ENCODE measurements at regions of chr2 and their contacts with region 1.

Region 1: DNA sequence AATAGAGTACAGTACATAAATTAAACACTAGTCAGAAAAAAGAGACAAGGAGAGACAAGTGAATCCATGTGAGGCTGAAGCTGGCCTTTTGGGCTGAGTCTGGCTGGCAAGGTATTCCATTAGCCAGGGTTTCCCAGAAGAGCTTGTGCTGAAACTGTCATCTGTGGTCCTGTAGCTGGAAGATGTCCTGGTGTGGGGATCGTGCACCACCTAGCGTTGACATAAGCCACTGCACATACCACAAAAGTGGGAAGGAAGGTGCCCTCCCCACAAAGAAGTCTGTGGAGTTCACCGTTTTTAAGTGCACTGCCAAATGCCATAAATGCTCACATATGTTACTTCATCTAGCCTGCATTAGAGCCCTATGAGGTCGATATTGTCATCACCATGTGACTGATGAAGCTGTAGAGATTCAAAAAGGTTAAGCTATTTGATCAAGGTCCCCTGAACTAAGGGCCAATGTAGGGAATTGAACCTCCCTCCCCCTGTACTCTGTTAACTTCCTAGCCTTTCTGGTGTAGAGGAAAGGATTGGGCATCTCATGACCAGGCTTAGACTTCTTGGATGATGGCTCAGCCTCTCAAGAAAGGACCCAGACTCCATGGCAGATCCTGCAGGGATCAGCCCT is 31.9 kb upstream of the GALNT14 start:
- DNase-seq: peak; percentile 64 to 82 (median 76)
- H3K4me3 ChIP-seq: no peak overlapping the region
- H3K27ac ChIP-seq: no peak overlapping the region
- H3K4me1 ChIP-seq: peaks cover 0 to 4% (median 2%) of the 10 kb centered on the region in 4 experiments
- H3K27me3 ChIP-seq: no peaks in the 10 kb centered on the region

Region 2: DNA sequence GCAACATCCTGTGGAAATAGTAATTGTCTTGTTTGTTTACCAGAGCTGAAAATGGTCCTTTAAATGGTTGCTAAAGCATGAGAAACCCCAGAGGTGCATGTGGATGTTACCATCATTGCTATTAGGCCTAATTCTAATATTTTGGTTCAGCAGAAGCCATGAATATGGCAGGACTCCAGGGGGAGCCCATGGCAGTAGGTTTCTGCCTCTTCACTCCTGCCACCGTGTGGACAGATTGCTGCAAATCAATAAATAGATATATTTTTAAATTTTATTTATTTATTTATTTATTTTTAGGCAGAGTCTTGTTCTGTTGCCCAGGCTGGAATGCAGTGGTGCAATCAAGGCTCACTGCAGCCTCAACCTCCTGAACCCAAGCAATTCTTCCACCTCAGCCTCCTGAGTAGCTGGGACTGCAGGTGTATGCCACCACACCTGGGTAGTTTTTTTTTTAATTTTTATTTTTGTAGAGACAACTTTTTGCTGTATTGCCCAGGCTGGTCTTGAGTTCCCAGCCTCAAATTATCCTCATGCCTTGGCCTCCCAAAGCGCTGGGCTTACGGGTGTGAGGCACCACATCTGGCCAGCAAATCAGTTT is 308.0 kb before region 1 on chr2:
- CTCF ChIA-PET with region 1: interaction called, 23 read pairs
- POLR2A ChIA-PET with region 1: no interaction called
- DNase-seq: peak; percentile 82 to 91 (median 87)
- H3K4me3 ChIP-seq: no peak overlapping the region
- H3K27ac ChIP-seq: no peak overlapping the region
- H3K4me1 ChIP-seq: peaks cover 6 to 20% (median 14%) of the 10 kb centered on the region in 4 experiments
- H3K27me3 ChIP-seq: peaks cover 0 to 6% (median 0%) of the 10 kb centered on the region in 5 experiments

Region 3: DNA sequence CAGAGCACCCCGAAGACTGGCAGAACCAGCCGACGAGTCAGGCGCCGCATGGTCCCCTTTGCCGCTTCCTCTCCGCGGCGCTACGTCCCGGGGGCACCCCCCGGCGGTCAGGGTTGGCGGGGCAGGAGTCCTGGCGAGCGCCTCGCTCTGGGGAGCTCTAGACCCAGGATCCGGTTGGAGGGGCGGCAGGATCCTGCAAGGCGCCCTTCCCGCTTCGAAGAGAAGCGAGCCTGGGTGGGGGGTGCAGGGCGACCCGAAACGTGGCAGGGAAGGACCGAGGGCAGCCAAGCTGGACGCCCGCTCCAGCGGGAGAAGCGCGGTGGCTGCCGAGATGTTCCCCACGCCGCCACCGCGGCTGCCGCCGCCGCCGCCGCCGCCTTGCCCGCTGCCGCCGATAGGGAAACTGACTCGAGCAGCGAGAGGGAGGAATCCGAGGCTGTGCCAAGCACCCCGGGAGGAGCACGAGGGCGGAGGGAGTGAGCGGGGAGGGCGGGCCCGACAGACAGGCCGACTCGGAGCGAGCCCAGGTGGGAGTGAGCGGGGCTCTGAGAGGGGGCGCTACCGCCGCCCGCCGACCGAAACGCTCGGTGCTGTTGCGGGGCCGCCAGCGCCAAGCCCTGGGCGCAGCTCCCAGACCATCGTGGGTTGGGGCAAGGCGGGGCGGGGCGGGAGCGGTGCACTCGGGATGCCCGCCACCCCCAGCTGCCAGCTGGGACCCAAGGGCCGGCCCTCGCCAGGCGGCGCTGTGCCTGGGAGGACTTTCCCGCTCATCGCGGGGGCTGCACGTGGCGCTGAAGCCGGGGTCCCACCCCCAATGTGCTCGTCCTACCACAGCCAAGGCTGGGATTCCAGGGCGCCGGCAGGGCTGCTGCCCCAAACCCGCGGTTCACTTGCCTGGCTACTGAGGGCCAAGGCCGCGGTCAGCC is 31.9 kb before region 1 on chr2 and contains the start of gene GALNT14:
- CTCF ChIA-PET with region 1: interaction called, 19 read pairs
- POLR2A ChIA-PET with region 1: no interaction called
- DNase-seq: peak; percentile 66 to 85 (median 76)
- H3K4me3 ChIP-seq: peak within 1 kb of the TSS; percentile 44 to 81 (median 71)
- H3K27ac ChIP-seq: no peak within 1 kb of the TSS
- H3K4me1 ChIP-seq: peaks cover 4 to 25% (median 22%) of the 10 kb centered on the region in 4 experiments
- H3K27me3 ChIP-seq: peaks cover 0 to 23% (median 0%) of the 10 kb centered on the region in 5 experiments

Region 4: DNA sequence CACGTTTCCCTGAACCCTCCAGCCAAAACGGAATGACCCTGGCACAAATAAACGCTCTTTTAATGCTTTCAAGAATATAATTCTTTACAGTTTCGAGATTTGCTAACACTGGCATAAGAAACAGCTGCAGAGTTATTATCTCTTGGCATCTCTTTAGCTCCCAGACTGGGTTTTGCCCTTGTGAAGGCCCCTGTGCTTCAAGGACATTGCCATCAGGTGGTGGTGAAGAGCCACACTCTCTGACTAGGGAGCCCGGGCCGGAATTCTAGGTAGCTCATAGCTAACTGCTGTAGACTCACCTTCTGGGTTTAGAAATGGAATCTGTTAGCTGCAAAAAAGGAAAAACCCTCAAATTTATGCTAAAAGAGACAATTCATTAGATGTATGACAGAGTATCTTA is 18.7 kb before region 1 on chr2:
- CTCF ChIA-PET with region 1: interaction called, 11 read pairs
- POLR2A ChIA-PET with region 1: no interaction called
- DNase-seq: no peak
- H3K4me3 ChIP-seq: no peak overlapping the region
- H3K27ac ChIP-seq: no peak overlapping the region
- H3K4me1 ChIP-seq: no peaks in the 10 kb centered on the region
- H3K27me3 ChIP-seq: peaks cover 0 to 4% (median 0%) of the 10 kb centered on the region in 5 experiments

Region 5: DNA sequence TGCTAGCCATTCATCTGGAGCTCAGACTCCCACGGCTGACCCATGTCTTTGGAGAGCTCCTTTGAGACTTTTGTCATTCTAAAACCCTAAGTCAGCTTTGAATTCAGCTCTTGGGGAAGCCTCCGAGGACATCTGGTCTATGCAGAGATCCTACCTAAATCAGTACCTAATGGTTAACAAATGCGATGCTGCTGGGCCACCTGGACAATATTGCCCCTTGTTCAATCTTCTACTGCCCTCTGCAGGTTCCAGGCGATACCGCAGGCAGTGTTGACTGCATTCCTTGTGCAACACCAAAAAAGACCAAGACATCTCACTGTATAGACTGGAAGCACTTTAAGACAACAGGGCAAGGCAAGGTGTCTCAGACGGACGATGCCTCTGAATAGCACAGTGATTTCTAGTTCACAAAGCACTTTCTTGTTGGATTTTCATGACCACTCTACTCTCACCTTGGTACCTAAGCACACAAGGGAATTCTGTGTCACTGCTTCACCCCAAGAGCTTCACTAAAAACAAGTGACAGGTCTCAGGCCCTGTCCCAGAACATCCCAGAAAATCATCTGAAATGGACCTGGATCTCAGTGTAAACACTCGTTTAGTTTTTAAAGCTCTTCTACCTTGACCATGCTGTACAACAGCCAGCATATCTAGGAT is 163.5 kb after region 1 on chr2:
- CTCF ChIA-PET with region 1: interaction called, 59 read pairs
- POLR2A ChIA-PET with region 1: no interaction called
- DNase-seq: peak; percentile 69 to 88 (median 83)
- H3K4me3 ChIP-seq: no peak overlapping the region
- H3K27ac ChIP-seq: no peak overlapping the region
- H3K4me1 ChIP-seq: no peaks in the 10 kb centered on the region
- H3K27me3 ChIP-seq: no peaks in the 10 kb centered on the region